ENCODE measurements at regions of chr2 and their contacts with region 1.

Region 1: DNA sequence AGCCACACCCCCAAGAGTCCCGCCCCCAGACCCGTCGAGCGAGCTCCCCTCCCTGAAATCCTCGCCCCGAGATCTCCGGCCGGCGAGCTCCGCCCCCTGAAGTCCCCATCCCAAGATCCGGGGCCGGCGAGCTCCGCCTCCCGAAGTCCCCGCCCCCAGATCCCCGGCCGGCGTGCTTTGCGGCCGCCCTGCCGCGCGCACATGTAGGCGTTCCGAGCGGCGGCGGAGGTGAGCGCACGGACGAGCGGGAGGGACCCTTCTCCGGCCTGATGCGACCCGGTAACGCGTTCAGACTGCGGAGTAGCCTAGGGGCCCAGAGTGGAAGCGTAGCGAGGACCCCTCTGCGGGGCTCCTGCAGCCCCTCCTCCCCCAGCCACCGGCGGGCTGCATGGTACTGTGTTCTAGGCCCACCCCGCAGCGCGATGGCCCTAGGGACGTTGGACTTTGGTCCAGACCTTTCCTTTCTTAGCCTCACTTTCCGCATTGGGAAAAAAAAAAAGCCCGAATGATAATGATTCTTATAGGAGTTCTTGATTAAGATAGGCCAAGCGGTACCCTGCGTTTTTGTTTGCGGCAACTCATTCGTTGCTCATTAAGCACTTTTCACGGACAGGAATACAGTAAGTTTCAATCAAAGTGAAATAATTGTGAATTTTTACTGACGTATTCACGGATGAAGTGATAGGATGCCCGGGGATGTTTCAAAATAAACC is at the start of gene TMEM177:
- DNase-seq: peak; percentile 92 to 95
- H3K4me3 ChIP-seq: peak within 1 kb of the TSS; percentile 93
- H3K4me3 Mint-ChIP-seq: peak within 1 kb of the TSS; percentile 92
- H3K27ac Mint-ChIP-seq: peak within 1 kb of the TSS; percentile 50
- H3K4me1 ChIP-seq: 0 out of 2 replicates have a peak, but pooled peaks cover 10% of the 10 kb centered on the region
- H3K4me1 Mint-ChIP-seq: no peaks in the 10 kb centered on the region
- H3K27me3 ChIP-seq: no peaks in the 10 kb centered on the region
- H3K27me3 Mint-ChIP-seq: no peaks in the 10 kb centered on the region
- CTCF ChIP-seq: no peak
- total RNA-seq, gene TMEM177: 35.7 and 36.7 TPM in 2 replicates

Region 2: DNA sequence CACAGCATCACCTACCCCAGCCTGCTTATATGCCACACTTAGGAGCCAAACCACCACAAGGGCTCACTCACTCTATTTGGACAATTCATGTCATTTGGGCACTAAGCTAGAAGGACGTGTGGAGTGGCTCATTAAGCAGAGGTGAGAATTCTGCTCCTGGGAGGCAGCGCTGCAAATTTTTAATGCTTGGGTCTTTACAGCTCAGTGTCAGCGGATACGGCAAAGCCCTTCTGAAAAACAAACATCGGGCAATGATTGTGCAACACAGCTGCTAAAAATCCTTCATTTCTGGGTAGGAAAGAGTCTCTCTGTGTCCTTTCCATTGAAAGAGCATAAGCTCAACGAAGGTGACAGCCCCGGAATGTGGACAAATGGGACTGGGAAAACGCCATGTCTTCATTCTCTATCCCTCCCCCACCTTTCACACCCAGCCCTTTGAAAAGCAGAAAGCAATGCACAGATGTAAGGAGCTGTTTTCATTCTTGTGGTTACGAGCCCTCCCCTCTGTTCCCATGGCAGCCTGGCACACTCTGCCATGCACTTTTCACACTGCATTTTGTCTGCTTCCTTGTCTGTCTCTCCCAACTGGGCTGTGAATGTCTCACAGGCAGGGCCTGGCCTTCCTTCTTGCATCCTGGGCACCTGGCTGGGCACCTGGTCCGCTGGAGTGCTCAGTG is 15.8 kb after region 1 on chr2:
- CTCF ChIA-PET with region 1: interaction called, 11 read pairs
- POLR2A ChIA-PET with region 1: interaction called, 4 read pairs
- intact Hi-C with region 1: no loop called
- DNase-seq: no peak
- H3K4me3 ChIP-seq: no peak overlapping the region
- H3K4me3 Mint-ChIP-seq: no peak overlapping the region
- H3K27ac Mint-ChIP-seq: no peak overlapping the region
- H3K4me1 ChIP-seq: peaks cover 5% of the 10 kb centered on the region; the same call in 1 of the 2 replicates
- H3K4me1 Mint-ChIP-seq: peaks cover 8% of the 10 kb centered on the region
- H3K27me3 ChIP-seq: no peaks in the 10 kb centered on the region
- H3K27me3 Mint-ChIP-seq: no peaks in the 10 kb centered on the region
- CTCF ChIP-seq: no peak

Region 3: DNA sequence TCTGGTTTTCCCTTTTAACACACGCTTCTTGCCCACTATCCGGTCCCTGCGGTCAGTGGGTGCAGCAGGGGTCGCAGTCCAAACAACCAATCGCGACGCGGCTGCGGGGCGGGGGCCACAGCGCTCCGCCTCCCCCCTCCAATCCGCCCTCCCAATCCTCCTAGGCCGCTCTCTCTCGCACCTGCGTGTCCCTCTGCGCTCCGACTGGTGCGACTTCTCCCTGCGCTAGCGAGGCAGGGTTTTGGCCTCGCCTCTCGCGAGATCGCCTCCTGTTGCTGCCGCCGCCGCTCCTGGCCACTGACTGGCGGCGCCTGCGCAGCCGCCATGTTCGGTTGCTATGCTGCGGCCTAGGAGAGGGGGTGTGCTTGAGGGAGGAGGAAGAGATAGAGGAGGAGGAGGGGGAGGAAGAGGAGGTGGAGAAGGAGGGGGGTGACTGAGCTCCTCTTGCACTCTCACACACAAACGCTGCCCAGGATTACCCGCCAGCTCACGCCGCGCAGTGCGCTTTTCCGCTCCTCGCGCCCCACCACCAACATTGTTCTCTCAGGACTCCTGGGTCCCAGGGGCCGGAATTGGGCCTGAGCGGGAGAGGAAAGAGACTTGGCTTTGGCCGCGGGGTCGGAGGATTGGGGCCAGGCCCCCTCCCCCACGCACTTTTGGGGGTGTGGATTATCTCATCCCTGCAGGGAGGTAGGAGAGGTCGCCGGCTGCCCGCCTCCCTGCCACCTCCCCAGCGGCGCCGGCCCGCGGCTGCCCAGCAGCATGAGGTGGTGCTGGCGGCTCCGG is 80.5 kb after region 1 on chr2 and contains the start of gene PTPN4:
- CTCF ChIA-PET with region 1: no interaction called
- POLR2A ChIA-PET with region 1: interaction called, 12 read pairs
- intact Hi-C with region 1: no loop called
- DNase-seq: peak; percentile 98 to 99
- H3K4me3 ChIP-seq: peak within 1 kb of the TSS; percentile 81
- H3K4me3 Mint-ChIP-seq: peak within 1 kb of the TSS; percentile 84
- H3K27ac Mint-ChIP-seq: peak within 1 kb of the TSS; percentile 92
- H3K4me1 ChIP-seq: peaks cover 4% of the 10 kb centered on the region; the same call in 1 of the 2 replicates
- H3K4me1 Mint-ChIP-seq: peaks cover 24% of the 10 kb centered on the region
- H3K27me3 ChIP-seq: no peaks in the 10 kb centered on the region
- H3K27me3 Mint-ChIP-seq: no peaks in the 10 kb centered on the region
- CTCF ChIP-seq: no peak
- total RNA-seq, gene PTPN4: 45.8 and 46.8 TPM in 2 replicates

Region 4: DNA sequence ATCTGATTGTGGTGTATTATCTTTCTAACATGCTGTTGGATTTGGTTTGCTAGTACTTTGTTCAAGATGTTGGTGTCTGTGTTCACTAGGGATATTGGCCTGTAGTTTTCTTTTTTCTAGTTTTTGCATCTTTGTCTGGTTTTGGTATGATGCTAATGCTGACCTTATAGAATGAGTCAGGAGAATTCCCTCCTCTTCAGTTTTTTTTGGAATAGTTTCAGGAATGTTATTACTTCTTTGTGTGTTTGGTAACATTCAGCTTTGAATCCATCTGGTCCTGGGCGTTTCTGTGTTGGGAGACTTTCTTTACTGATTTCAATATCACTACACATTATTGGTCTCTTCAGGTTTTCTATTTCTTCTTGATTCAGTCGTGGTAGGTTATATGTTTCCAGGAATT is 209.5 kb after region 1 on chr2:
- CTCF ChIA-PET with region 1: no interaction called
- POLR2A ChIA-PET with region 1: no interaction called
- intact Hi-C with region 1: no loop called
- DNase-seq: no peak
- H3K4me3 ChIP-seq: no peak overlapping the region
- H3K4me3 Mint-ChIP-seq: no peak overlapping the region
- H3K27ac Mint-ChIP-seq: no peak overlapping the region
- H3K4me1 ChIP-seq: no peaks in the 10 kb centered on the region
- H3K4me1 Mint-ChIP-seq: no peaks in the 10 kb centered on the region
- H3K27me3 ChIP-seq: no peaks in the 10 kb centered on the region
- H3K27me3 Mint-ChIP-seq: no peaks in the 10 kb centered on the region
- CTCF ChIP-seq: no peak